Common myeloid progenitor, CD34-positive (primary cell): ENCODE measurements at regions of chr10 and their contacts with region 1.

Region 1: GRCh38 chr10:123147635-123148413 is at the start of gene HMX2:
- DNase-seq: peak in 1 of 3 donors; percentile 39
- H3K4me3 ChIP-seq: peak within 1 kb of the TSS in 2 of 7 experiments; percentile 11 to 24
- H3K27ac ChIP-seq: no peak within 1 kb of the TSS
- H3K4me1 ChIP-seq: peaks cover 2 to 45% (median 42%) of the 10 kb centered on the region in 4 experiments
- H3K27me3 ChIP-seq: peaks cover 13 to 100% (median 70%) of the 10 kb centered on the region in 5 experiments

Region 2: GRCh38 chr10:123008439-123009205 is 139.2 kb before region 1 on chr10 and contains the starts of genes ACADSB and IKZF5:
- CTCF ChIA-PET with region 1: no interaction called
- POLR2A ChIA-PET with region 1: no interaction called
- DNase-seq: peak; percentile 98 to 99 (median 99)
- H3K4me3 ChIP-seq: peak within 1 kb of the TSS; percentile 65 to 97 (median 93)
- H3K27ac ChIP-seq: peak within 1 kb of the TSS; percentile 76 to 92
- H3K4me1 ChIP-seq: peaks cover 10 to 31% (median 22%) of the 10 kb centered on the region in 4 experiments
- H3K27me3 ChIP-seq: no peaks in the 10 kb centered on the region

Region 3: DNA sequence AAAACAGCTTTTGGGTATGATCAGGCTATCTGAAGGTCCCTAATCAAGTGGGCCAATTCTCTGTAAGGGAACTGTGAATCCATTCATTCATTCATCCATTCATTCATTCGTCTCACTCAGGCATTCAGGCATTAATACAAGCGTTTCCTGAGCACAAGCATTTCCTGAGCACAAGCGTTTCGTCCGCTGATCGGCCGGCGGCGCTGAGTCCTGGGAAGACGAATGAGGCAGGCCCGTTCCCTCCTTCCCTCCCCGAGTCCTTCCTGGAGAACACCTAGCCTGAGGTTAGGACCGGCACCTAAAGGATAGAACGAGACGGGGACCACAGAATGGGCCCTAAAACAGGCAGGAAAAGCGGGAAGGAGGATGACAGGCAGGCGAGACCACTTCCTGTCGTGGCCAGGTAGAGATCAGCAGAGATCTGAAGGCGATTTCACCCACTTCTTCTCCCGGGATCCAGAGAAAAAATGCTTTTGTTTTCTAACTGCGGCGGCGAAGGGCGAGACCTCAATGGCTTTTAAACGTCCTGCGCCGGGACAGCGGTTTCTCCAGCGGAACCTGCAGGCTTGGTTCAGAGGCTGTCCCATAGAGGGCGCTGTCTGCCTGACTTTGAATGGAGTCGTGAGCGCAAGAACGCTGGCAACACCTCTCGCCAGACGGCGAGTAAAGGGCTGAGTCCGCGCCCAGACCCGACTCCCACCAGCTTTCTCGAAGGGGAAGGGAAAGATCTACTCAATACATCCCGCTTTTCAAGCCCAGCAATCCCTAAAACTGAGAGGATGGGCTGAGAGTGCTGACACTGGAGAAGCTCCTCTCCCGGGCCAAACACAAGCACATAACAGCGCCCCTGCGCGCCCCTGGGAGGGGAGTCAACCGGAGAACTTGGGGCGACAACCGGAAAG is 15.0 kb before region 1 on chr10:
- CTCF ChIA-PET with region 1: interaction called, 37 read pairs
- POLR2A ChIA-PET with region 1: interaction called, 3 read pairs
- DNase-seq: peak; percentile 86 to 94 (median 91)
- H3K4me3 ChIP-seq: peak overlapping the region in 4 of 7 experiments; percentile 13 to 71 (median 44)
- H3K27ac ChIP-seq: no peak overlapping the region
- H3K4me1 ChIP-seq: peaks cover 0 to 45% (median 28%) of the 10 kb centered on the region in 4 experiments
- H3K27me3 ChIP-seq: peaks cover 13 to 99% (median 64%) of the 10 kb centered on the region in 5 experiments